Adrenal gland (tissue), 19 donors: ENCODE measurements at regions of chr1 and their contacts with region 1.

Region 1: DNA sequence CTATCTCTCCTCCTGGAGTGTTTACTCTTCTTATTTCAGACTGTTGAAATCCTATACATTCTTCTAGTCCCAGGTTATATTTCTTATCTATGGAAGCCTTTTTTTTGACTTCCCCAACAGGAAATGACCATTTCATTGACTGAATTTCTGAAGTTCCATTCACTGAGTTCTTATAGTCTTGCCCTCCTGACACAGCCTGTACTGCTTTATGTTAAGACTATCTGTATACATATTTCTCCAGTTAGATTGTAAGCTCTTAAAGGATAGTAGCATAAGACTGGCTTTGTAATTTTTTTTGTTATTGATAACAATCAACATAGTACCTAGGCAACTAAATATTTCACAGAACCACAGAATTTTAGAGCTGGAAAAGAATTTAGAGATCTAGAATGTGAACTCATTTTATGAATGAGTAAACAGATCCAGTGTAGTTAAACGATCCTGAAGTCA is 14.9 kb upstream of the MACF1 start:
- DNase-seq: no peak
- H3K4me3 ChIP-seq: no peak overlapping the region
- H3K27ac ChIP-seq: no peak overlapping the region
- H3K4me1 ChIP-seq: peaks cover 19 to 54% of the 10 kb centered on the region in 2 donors
- H3K27me3 ChIP-seq: no peaks in the 10 kb centered on the region
- CTCF ChIP-seq: no peak
- POLR2A ChIP-seq: no peak

Region 2: DNA sequence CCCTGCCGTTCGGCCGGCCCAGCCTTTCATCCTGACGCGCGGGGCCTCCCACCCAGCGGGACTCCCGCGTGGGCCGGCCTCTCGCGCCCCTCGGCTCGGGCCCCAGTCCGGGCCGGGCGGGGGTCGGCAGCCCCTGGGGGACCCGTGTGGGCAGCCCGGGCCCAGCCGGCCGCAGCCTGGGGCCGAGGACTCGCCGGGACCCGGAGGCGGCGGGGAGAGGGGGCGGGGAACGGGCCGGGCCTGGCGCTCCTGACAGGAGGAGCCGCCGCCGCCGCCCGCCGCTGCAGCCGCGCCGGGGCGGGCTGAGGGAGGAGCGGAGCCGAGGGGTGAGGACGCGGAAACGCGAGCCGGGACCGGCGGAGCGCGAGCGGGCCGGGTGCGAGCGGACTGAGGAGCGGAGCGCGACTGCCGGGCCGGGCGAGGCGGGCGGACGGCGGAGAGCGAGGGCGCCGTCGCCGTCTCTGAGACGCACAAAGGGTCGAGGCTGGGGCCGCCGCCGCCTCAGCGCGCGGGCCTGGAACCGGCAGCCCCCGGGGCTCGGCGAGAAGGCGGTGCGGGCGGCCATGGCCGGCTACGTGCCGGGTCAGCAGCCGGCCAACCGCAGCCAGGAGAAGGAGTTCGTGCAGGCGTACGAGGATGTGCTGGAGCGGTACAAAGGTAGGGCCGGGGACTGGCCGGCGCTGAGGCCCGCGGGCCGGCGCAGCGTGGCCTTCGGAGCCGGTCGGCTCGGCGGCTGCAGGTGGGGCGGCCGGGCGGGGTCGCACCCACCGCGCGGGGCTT is 84.4 kb before region 1 on chr1:
- intact Hi-C with region 1: loop called in 1 of 2 experiments (anchors 5 kb)
- DNase-seq: peak; percentile 76 to 82 (median 82)
- H3K4me3 ChIP-seq: peak overlapping the region; percentile 52 to 94 (median 72)
- H3K27ac ChIP-seq: peak overlapping the region; percentile 85 to 98 (median 94)
- H3K4me1 ChIP-seq: peaks cover 45 to 63% of the 10 kb centered on the region in 2 donors
- H3K27me3 ChIP-seq: no peaks in the 10 kb centered on the region
- CTCF ChIP-seq: no peak
- POLR2A ChIP-seq: peak; percentile 37 to 71

Region 3: GRCh38 chr1:39115271-39116110 is 74.1 kb before region 1 on chr1:
- intact Hi-C with region 1: no loop called
- DNase-seq: no peak
- H3K4me3 ChIP-seq: no peak overlapping the region
- H3K27ac ChIP-seq: no peak overlapping the region
- H3K4me1 ChIP-seq: peaks cover 34 to 46% of the 10 kb centered on the region in 2 donors
- H3K27me3 ChIP-seq: no peaks in the 10 kb centered on the region
- CTCF ChIP-seq: no peak
- POLR2A ChIP-seq: no peak